Activated CD8-positive, alpha-beta T cell treated with anti-CD3 and anti-CD28 coated beads, Interleukin-2, amount 10 ng/mL, durations not matched to agents 7 days and 5 days (primary cell): ENCODE measurements at regions of chr19 and their contacts with region 1.

Region 1: GRCh38 chr19:35509861-35510625 is 3.4 kb downstream of the DMKN start:
- DNase-seq: peak; percentile 78
- ATAC-seq: peak; percentile 85
- H3K4me3 Mint-ChIP-seq: peak overlapping the region; percentile 38
- H3K27ac Mint-ChIP-seq: no peak overlapping the region
- H3K4me1 Mint-ChIP-seq: peaks cover 16% of the 10 kb centered on the region
- H3K27me3 Mint-ChIP-seq: peaks cover 58% of the 10 kb centered on the region

Region 2: GRCh38 chr19:35484252-35485036 is 25.6 kb before region 1 on chr19:
- CTCF ChIA-PET with region 1: interaction called, 11 read pairs
- POLR2A ChIA-PET with region 1: no interaction called
- DNase-seq: no peak
- ATAC-seq: no peak
- H3K4me3 Mint-ChIP-seq: no peak overlapping the region
- H3K27ac Mint-ChIP-seq: no peak overlapping the region
- H3K4me1 Mint-ChIP-seq: no peaks in the 10 kb centered on the region
- H3K27me3 Mint-ChIP-seq: peaks cover 14% of the 10 kb centered on the region

Region 3: GRCh38 chr19:35533822-35534521 is 23.9 kb after region 1 on chr19:
- CTCF ChIA-PET with region 1: interaction called, 14 read pairs
- POLR2A ChIA-PET with region 1: no interaction called
- DNase-seq: peak; percentile 71
- ATAC-seq: peak; percentile 90
- H3K4me3 Mint-ChIP-seq: peak overlapping the region; percentile 60
- H3K27ac Mint-ChIP-seq: peak overlapping the region; percentile 86
- H3K4me1 Mint-ChIP-seq: peaks cover 40% of the 10 kb centered on the region
- H3K27me3 Mint-ChIP-seq: peaks cover 29% of the 10 kb centered on the region

Region 4: DNA sequence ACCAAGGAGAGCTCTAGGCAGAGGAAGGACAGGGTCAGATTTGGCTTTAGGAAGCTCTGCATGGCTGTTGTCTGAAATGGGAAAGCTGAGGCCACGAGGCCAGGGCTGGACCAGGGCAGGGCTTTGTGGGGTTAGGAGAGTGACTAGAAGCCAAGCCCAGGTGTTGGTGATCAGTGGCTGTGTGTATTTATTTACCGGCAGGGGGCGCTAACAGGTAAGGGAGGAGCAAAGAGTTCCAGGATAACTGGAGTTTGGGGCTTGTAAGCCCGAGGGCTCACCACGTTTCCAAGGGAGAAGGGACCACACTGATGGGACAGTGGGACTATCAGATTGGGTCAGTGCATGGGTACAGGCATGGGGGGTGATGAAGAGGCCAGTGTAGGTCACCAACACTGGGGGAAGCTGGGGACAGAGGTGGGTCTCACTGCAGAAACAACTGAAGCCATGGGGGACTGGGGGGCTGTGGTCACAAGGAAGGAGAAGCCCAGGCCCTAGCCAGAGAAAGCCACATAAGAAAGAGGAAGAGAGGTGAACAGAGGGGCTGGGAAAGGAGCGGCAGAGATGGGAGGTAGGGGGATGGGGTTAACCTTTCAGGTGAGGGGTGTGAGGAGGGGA is 39.2 kb after region 1 on chr19:
- CTCF ChIA-PET with region 1: interaction called, 12 read pairs
- POLR2A ChIA-PET with region 1: no interaction called
- DNase-seq: peak; percentile 75
- ATAC-seq: no peak
- H3K4me3 Mint-ChIP-seq: no peak overlapping the region
- H3K27ac Mint-ChIP-seq: no peak overlapping the region
- H3K4me1 Mint-ChIP-seq: peaks cover 21% of the 10 kb centered on the region
- H3K27me3 Mint-ChIP-seq: no peaks in the 10 kb centered on the region

Region 5: GRCh38 chr19:35569281-35569781 is 59.3 kb after region 1 on chr19:
- CTCF ChIA-PET with region 1: no interaction called
- POLR2A ChIA-PET with region 1: no interaction called
- DNase-seq: no peak
- ATAC-seq: no peak
- H3K4me3 Mint-ChIP-seq: no peak overlapping the region
- H3K27ac Mint-ChIP-seq: no peak overlapping the region
- H3K4me1 Mint-ChIP-seq: peaks cover 2% of the 10 kb centered on the region
- H3K27me3 Mint-ChIP-seq: peaks cover 18% of the 10 kb centered on the region

Region 6: GRCh38 chr19:35592226-35592625 is 82.2 kb after region 1 on chr19:
- CTCF ChIA-PET with region 1: interaction called, 13 read pairs
- POLR2A ChIA-PET with region 1: interaction called, 3 read pairs
- DNase-seq: peak; percentile 39
- ATAC-seq: no peak
- H3K4me3 Mint-ChIP-seq: no peak overlapping the region
- H3K27ac Mint-ChIP-seq: no peak overlapping the region
- H3K4me1 Mint-ChIP-seq: peaks cover 9% of the 10 kb centered on the region
- H3K27me3 Mint-ChIP-seq: peaks cover 9% of the 10 kb centered on the region